Activated B cell treated with CpG ODN at 0.5 μM for 24 hours (primary cell): ENCODE measurements at regions of chr6 and their contacts with region 1.

Region 1: DNA sequence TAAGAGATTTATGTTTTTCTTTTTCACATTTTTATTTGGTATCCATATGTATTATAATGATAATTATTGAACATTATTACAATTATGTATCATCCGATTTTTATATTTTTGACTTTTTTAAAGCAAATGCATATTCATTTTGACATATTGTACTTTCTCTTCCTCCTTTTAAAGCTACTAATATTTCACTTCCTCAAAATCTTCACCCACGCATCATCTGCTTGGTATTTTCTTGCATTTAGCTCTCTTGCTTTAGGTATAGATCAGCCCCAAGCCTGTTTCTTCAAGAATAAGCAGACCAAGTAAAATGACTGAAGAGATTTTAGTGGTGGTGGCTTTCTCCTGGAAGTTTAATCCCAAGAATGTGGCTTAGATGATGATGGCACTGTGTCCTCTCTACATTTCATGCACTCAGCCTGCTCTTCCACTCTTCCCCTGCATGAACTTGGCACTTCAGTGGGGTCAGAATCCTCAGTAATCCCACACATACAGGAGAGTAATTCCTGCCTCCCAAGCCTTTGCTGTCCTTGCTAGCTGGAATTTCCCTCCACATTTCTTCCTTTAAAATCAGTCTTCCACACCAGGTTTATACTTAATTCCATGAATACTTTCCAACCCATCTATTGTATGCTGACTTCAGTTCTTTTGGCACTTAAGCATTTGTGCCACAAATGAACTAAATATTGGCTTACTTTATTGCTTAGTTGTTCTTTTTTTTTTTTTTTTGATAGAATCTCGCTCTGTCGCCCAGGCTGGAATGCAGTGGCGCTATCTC is 8.2 kb downstream of the NCOA7 start:
- DNase-seq: no peak
- ATAC-seq: peak; percentile 92
- H3K4me3 Mint-ChIP-seq: peak overlapping the region; percentile 21
- H3K27ac Mint-ChIP-seq: peak overlapping the region; percentile 73
- H3K4me1 Mint-ChIP-seq: peaks cover 63% of the 10 kb centered on the region
- H3K27me3 Mint-ChIP-seq: no peaks in the 10 kb centered on the region
- CTCF ChIP-seq: no peak

Region 2: GRCh38 chr6:125301435-125302391 is 497.2 kb before region 1 on chr6 and contains the start of gene HDDC2:
- CTCF ChIA-PET with region 1: no interaction called
- POLR2A ChIA-PET with region 1: no interaction called
- intact Hi-C with region 1: no loop called
- DNase-seq: peak; percentile 53
- ATAC-seq: peak; percentile 78
- H3K4me3 Mint-ChIP-seq: peak within 1 kb of the TSS; percentile 89
- H3K27ac Mint-ChIP-seq: peak within 1 kb of the TSS; percentile 78
- H3K4me1 Mint-ChIP-seq: peaks cover 38% of the 10 kb centered on the region
- H3K27me3 Mint-ChIP-seq: peaks cover 14% of the 10 kb centered on the region
- CTCF ChIP-seq: no peak
- total RNA-seq, gene HDDC2: 53.1 and 55.8 TPM in 2 replicates

Region 3: DNA sequence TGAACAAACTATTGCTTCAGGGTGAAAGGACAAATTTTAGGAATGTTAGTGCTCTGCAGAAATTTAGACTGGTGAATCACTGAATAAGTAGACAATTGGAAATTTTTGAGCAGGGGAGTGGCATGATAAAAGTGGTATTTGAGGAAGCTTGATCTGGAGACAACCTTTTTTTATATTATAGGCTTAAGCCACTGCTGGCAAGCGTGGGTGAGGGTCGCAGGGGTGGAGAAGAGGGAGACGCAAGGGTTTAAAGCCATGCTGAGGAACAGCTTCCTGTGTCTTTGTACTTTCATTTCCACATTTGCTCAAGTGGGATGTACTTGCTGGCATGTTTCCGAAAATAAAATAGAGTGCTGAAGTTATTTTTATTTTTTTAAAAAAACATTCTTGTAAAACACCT is 15.6 kb after region 1 on chr6:
- CTCF ChIA-PET with region 1: no interaction called
- POLR2A ChIA-PET with region 1: interaction called, 7 read pairs
- intact Hi-C with region 1: loop called (anchors 1 kb)
- DNase-seq: no peak
- ATAC-seq: peak; percentile 49
- H3K4me3 Mint-ChIP-seq: peak overlapping the region; percentile 29
- H3K27ac Mint-ChIP-seq: peak overlapping the region; percentile 26
- H3K4me1 Mint-ChIP-seq: peaks cover 73% of the 10 kb centered on the region
- H3K27me3 Mint-ChIP-seq: no peaks in the 10 kb centered on the region
- CTCF ChIP-seq: no peak

Region 4: DNA sequence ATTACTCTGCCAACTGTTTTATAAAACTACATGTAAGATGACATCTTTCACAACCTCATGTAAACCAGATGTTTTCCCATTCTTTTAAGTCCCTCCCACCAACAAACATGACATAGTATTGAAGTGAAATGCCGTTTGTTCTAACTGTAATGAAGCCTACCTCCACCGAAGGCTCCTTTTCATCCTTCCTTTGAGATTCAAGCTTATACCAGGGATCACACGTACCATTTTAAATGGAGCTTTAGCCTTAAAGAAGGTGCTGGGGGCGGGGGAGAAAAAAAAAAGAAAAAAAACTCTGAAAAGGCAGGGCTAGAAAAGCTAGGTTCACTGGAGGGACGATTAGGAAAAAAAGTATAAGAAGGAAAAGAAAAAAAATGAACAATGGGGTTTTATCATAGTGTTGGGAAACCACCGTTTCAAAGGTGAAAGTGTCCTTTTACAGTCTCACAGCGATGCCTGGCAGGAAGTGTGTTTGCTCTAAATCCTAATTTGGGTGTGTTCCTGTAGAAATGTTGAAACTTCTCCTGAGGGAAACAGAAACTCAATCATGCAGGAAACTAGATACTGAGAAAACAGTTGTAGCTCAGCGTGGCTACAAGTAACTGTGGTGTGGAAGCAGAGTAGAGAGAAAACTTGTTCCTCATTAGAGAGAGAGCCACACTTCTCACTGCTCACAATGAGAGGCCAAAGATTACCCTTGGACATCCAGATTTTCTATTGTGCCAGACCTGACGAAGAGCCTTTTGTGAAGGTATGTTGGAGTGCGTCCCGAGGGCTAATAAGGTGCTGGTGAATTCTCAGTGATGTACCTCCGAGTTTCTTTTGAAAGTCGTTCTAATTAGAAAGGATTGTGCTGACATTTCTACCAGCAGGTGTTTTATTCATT is 120.0 kb after region 1 on chr6:
- CTCF ChIA-PET with region 1: no interaction called
- POLR2A ChIA-PET with region 1: no interaction called
- intact Hi-C with region 1: loop called (anchors 1 kb)
- DNase-seq: no peak
- ATAC-seq: peak; percentile 90
- H3K4me3 Mint-ChIP-seq: peak overlapping the region; percentile 80
- H3K27ac Mint-ChIP-seq: peak overlapping the region; percentile 90
- H3K4me1 Mint-ChIP-seq: peaks cover 28% of the 10 kb centered on the region
- H3K27me3 Mint-ChIP-seq: no peaks in the 10 kb centered on the region
- CTCF ChIP-seq: no peak